ENCODE measurements at regions of chr17 and their contacts with region 1.

Region 1: GRCh38 chr17:28494445-28495188 is 11.5 kb upstream of the FOXN1 start:
- H3K4me3 ChIP-seq: no peak overlapping the region
- H3K27ac ChIP-seq: no peak overlapping the region
- H3K4me1 ChIP-seq: no peaks in the 10 kb centered on the region
- CTCF ChIP-seq: peak; percentile 86

Region 2: DNA sequence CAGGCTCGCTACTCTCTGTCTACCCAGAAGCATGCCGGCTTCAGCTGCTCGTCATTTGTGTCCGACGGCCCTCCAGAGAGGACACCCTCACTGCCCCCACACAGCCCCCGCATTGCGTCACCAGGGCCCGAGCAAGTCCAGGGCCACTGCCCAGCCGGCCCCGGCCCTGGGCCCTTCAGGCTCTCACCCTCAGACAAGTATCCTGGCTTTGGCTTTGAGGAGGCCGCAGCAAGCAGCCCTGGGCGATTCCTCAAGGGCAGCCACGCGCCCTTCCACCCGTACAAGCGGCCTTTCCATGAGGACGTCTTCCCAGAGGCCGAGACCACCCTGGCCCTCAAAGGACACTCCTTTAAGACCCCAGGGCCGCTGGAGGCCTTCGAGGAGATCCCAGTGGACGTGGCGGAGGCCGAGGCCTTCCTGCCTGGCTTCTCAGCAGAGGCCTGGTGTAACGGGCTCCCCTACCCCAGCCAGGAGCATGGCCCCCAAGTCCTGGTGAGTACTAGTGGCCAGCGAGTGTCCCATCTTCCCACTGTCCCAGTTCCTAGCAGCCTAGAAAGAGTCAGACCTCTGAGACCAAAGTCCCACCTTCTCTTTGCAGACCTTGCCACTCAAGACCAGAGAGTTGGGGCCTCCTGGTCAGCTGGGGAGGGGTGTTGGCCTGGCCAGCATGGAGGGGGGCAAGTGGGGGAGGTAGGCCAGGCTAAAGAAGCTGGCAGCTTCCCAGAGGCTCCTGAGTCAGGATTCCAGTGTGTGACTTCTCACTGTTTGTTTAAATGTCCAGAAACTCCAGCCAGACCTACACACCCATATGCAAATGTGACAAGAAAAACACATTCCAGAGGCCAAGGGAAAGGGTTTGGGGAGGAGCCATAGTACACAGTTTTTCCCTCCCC is 30.1 kb after region 1 on chr17:
- CTCF ChIA-PET with region 1: interaction called, 17 read pairs
- POLR2A ChIA-PET with region 1: interaction called, 3 read pairs
- H3K4me3 ChIP-seq: no peak overlapping the region
- H3K27ac ChIP-seq: 0 out of 2 replicates have a peak overlapping the region, but pooled peaks have one; percentile 7
- H3K4me1 ChIP-seq: peaks cover 5% of the 10 kb centered on the region; the same call in 1 of the 2 replicates
- CTCF ChIP-seq: no peak

Measured in HEK293 (cell line).